Activated T-helper 1 cell treated with anti-CD3 and anti-CD28 coated beads, Interleukin-12 subunit alpha, Interleukin-12 subunit beta, Interleukin-2, Interleukin-4 antibody, amounts not matched to agents 30 ng/mL and 10 ng/mL and 1 ng/mL, durations not matched to agents 14 hours and 24 hours and 36 hours (primary cell): ENCODE measurements at regions of chr2 and their contacts with region 1.

Region 1: DNA sequence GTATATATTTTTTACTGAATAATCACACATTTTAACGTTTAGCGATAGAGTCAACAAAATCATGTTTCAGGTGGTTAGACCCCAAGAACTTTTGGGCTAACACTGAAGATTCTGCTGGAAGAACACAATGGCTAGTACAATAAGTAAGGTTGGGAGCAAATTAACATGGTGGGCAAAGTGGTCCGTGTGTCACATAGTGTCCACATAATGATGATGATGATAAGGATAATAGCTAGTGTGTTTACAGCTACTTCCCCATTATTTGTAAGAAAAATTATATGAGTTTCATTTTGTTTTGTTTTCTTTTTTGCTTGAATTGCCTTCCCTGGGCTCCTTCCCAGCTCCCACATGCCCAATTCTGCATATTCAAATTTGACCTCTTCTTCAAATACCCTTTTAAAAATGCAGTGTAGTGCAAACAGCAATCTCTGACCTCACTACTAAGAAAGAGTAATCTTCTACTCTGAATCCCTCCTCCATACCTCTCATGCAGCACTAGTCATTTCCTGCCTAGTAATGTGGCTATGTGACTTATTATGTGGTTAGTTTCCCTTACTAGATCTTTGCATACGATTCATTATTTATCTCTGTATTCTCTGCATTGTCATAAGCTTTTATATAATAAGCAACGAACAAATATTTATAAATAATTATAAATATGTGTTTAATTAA is 16.9 kb upstream of the VPS54 start:
- DNase-seq: peak; percentile 36
- H3K4me3 Mint-ChIP-seq: peak overlapping the region; percentile 51
- H3K27ac Mint-ChIP-seq: peak overlapping the region; percentile 89
- H3K4me1 Mint-ChIP-seq: peaks cover 55% of the 10 kb centered on the region
- H3K27me3 Mint-ChIP-seq: no peaks in the 10 kb centered on the region

Region 2: GRCh38 chr2:63903003-63903402 is 133.2 kb before region 1 on chr2:
- intact Hi-C with region 1: loop called (anchors 5 kb)
- DNase-seq: no peak
- H3K4me3 Mint-ChIP-seq: no peak overlapping the region
- H3K27ac Mint-ChIP-seq: peak overlapping the region; percentile 45
- H3K4me1 Mint-ChIP-seq: peaks cover 6% of the 10 kb centered on the region
- H3K27me3 Mint-ChIP-seq: no peaks in the 10 kb centered on the region

Region 3: DNA sequence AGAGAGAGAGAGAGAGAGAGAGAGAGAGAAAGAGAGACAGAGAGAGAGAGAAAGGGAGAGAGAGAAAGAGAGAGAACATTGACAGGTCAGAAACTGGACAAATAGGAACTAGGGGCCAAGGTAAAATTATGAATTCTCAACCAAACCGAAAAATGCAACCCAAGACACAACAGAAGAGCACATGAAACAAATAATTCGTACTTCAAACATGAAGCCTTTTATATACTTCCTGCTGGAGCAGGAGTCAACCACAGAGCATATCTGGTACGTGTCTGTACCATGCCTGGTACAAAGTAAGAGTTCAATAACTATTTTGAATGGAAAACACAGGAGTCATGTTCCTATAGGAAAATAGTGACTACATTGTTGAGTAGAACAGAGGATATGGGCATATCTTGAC is 10.4 kb before region 1 on chr2:
- intact Hi-C with region 1: loop called (anchors 1 kb)
- DNase-seq: no peak
- H3K4me3 Mint-ChIP-seq: no peak overlapping the region
- H3K27ac Mint-ChIP-seq: no peak overlapping the region
- H3K4me1 Mint-ChIP-seq: peaks cover 26% of the 10 kb centered on the region
- H3K27me3 Mint-ChIP-seq: peaks cover 5% of the 10 kb centered on the region

Region 4: DNA sequence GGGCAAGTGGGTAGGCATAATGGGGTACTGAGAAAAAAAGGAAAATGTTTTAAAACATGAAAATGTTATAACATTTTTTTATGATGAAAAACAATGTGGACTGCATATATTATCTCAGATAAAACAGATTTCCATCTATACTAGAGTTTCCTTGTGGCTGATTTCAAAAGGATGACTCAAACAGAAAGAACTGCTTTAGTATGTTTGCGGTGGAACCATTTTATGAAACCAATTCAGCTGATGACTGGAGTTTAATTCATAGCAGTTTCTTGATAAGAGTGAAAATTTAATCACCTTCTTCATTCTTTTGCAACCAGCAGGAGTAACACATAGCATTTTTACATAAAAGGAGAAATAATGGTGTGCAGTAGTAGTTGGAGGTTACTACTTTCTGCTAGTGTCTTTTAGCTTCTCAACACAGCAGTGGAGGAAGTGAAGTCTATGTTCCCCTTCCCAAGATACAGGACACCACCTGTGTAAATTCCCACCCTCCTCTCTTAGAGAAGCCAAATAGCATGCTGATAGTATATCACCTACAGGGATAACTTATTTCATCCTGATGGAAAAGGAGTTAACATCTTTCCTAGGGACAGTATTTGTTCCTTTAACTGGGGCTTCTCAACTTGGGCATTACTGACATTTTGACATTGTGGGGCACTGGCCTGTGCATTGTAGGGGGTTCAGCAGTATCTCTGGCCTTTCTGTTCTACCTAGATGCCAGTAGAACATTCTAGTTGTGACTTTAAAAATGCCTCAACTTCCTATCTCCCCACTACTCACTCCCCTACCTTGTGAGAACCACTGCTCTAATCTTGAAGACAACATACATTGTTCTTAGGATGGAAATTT is 78.1 kb after region 1 on chr2:
- intact Hi-C with region 1: loop called (anchors 1 kb)
- DNase-seq: no peak
- H3K4me3 Mint-ChIP-seq: peak overlapping the region; percentile 17
- H3K27ac Mint-ChIP-seq: peak overlapping the region; percentile 59
- H3K4me1 Mint-ChIP-seq: peaks cover 73% of the 10 kb centered on the region
- H3K27me3 Mint-ChIP-seq: no peaks in the 10 kb centered on the region

Region 5: GRCh38 chr2:64295326-64296139 is 259.4 kb after region 1 on chr2:
- intact Hi-C with region 1: loop called (anchors 5 kb)
- DNase-seq: peak; percentile 23
- H3K4me3 Mint-ChIP-seq: no peak overlapping the region
- H3K27ac Mint-ChIP-seq: peak overlapping the region; percentile 59
- H3K4me1 Mint-ChIP-seq: peaks cover 34% of the 10 kb centered on the region
- H3K27me3 Mint-ChIP-seq: peaks cover 12% of the 10 kb centered on the region

Region 6: DNA sequence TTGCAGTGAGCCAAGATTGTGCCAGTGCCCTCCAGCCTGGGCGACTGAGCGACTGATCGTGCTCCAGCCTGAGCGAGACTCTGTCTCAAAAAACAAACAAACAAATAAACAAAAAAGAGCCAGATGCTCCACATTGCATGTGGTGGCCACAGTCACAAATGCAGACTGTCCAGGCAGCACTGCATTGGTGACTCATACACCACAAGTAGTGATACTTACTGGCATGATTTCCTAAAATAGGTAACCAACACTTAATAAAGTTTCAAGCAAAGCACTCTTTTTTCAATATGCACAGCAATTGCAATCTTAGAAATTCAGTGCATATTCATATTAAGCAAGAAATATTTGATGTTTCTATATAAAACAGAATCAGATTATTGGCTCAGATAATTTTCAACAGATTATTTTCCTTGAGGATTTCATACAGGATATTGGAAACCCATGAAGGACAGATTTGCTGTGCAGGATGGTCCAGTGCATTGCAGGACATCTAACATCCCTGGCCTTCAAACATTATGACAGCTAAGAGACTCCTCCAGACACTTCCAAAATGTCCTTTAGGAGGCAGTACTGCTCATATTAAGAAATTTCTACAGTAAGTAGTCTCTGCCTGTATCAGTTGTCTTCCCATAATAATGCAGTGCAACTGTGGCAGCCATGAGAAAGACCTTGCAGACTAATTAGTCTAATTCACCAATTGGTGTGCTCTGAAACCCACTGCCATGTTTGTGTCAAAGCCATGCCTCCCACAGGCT is 942.5 kb after region 1 on chr2:
- intact Hi-C with region 1: loop called (anchors 1 kb)
- DNase-seq: no peak
- H3K4me3 Mint-ChIP-seq: no peak overlapping the region
- H3K27ac Mint-ChIP-seq: no peak overlapping the region
- H3K4me1 Mint-ChIP-seq: peaks cover 35% of the 10 kb centered on the region
- H3K27me3 Mint-ChIP-seq: peaks cover 2% of the 10 kb centered on the region